ENCODE measurements at regions of chr5 and their contacts with region 1.

Region 1: DNA sequence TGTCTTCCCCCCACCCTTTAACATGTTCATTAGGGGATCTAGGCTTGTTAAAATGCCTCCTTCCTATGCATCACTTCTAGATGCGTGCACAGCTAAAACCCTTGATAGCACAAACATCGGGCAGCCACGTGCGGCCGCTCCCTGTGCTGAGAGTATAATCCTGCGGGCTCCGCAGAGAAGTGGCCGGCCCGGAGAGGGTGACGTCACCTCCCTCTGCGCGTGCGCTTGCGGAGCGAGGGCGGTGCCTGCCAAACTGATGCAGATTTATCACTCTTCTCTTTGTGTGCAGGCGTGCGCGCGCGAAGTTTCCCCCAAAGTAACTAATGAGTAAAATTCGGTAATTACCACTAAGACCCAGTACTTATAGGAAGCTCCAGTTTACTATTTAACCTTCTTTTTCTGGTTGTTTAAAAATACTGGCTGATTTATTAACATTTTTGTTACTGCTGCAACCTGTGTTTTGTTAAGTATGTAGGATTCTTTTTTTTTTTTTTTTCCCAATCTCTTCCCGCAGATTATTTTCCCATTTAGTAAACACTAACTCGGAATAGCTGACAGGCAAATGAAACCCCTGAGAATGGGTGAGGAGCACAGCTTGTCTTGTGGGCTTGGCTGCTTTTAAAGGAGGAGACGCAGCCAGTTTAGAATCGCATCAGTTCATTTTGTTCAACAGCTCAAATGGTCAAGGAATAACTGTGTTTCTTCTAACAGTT is 121.6 kb downstream of the TRIO start:
- H3K4me3 Mint-ChIP-seq: peak overlapping the region; percentile 50
- H3K27ac Mint-ChIP-seq: no peak overlapping the region
- H3K4me1 Mint-ChIP-seq: peaks cover 29% of the 10 kb centered on the region
- H3K27me3 Mint-ChIP-seq: no peaks in the 10 kb centered on the region

Region 2: DNA sequence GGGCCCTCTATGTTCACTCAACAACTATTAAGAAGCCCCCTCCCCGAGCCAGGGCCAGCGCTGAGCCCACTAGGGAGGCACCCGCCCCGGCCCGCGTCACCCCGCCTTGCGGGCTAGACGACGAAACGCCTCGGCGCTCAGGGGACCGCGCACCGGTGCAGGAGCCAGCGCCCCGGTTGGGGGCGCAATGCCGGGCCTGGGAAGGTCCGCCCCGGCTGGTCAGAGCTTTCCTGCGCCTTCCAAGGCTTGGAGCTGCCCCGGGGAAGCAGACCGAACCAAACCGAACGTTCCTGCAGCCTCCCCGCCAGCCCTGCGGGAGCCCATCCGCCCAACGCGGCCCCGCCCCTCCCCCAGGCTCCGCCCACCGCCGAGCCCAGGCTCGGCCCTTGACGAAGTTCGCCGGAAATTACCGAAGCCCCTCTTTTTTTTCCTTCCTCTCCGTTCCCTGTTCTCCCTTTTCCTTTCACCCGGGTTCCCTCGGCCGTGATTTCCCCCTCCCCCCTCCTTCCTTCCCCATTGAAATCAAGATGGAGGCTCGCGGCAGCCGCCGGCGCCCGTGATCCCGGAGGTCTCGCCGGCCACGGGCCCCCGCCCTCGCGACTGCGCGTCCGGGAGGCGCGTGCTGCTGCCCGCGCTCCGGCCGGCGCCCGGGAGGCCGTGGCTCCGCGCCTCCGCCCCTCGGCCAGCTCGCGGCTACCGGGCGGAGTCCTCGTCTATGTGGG is 121.8 kb before region 1 on chr5 and contains the start of gene TRIO:
- intact Hi-C with region 1: loop called (anchors 1 kb)
- H3K4me3 Mint-ChIP-seq: peak within 1 kb of the TSS; percentile 91
- H3K27ac Mint-ChIP-seq: peak within 1 kb of the TSS; percentile 90
- H3K4me1 Mint-ChIP-seq: peaks cover 28% of the 10 kb centered on the region
- H3K27me3 Mint-ChIP-seq: peaks cover 13% of the 10 kb centered on the region

Region 3: GRCh38 chr5:14208071-14209021 is 56.4 kb before region 1 on chr5:
- intact Hi-C with region 1: loop called (anchors 10 kb)
- H3K4me3 Mint-ChIP-seq: no peak overlapping the region
- H3K27ac Mint-ChIP-seq: no peak overlapping the region
- H3K4me1 Mint-ChIP-seq: peaks cover 78% of the 10 kb centered on the region
- H3K27me3 Mint-ChIP-seq: no peaks in the 10 kb centered on the region

Region 4: GRCh38 chr5:14223372-14223771 is 41.4 kb before region 1 on chr5:
- intact Hi-C with region 1: no loop called
- H3K4me3 Mint-ChIP-seq: no peak overlapping the region
- H3K27ac Mint-ChIP-seq: no peak overlapping the region
- H3K4me1 Mint-ChIP-seq: peaks cover 55% of the 10 kb centered on the region
- H3K27me3 Mint-ChIP-seq: no peaks in the 10 kb centered on the region

Region 5: GRCh38 chr5:14781106-14781505 is 516.3 kb after region 1 on chr5:
- intact Hi-C with region 1: no loop called
- H3K4me3 Mint-ChIP-seq: no peak overlapping the region
- H3K27ac Mint-ChIP-seq: no peak overlapping the region
- H3K4me1 Mint-ChIP-seq: peaks cover 17% of the 10 kb centered on the region
- H3K27me3 Mint-ChIP-seq: no peaks in the 10 kb centered on the region